Breast epithelium (tissue), 4 donors: ENCODE measurements at regions of chr10 and their contacts with region 1.

Region 1: GRCh38 chr10:30705101-30705624 is 75.6 kb upstream of the LYZL2 start:
- DNase-seq: no peak
- H3K4me3 ChIP-seq: no peak overlapping the region
- H3K27ac ChIP-seq: no peak overlapping the region
- H3K4me1 ChIP-seq: no peaks in the 10 kb centered on the region
- H3K27me3 ChIP-seq: no peaks in the 10 kb centered on the region
- CTCF ChIP-seq: no peak
- POLR2A ChIP-seq: no peak

Region 2: GRCh38 chr10:30820261-30820991 is 115.3 kb after region 1 on chr10:
- intact Hi-C with region 1: no loop called
- DNase-seq: no peak
- H3K4me3 ChIP-seq: no peak overlapping the region
- H3K27ac ChIP-seq: peak overlapping the region in 1 of 2 donors; percentile 38
- H3K4me1 ChIP-seq: no peaks in the 10 kb centered on the region
- H3K27me3 ChIP-seq: peaks cover 0 to 3% of the 10 kb centered on the region in 2 donors
- CTCF ChIP-seq: no peak
- POLR2A ChIP-seq: no peak

Region 3: DNA sequence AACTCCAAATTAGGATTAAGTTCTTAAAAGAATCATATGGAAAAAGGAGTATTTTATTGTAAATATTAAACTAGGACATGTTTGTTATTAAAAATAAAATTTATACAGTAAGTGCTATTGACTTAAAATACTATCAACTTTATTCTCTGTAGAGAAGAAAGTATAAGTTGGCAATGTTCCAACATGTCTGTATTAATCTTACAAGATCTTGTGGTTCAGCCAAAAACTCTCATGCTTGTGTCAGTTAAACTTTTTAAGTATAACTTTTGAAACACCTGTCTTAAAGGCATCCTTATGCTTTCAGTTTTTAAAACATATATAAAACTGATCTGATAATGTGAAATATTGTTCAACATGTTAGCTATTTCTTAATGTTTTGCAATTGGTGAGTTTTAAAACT is 774.6 kb after region 1 on chr10:
- intact Hi-C with region 1: loop called (anchors 5 kb)
- DNase-seq: no peak
- H3K4me3 ChIP-seq: no peak overlapping the region
- H3K27ac ChIP-seq: no peak overlapping the region
- H3K4me1 ChIP-seq: no peaks in the 10 kb centered on the region
- H3K27me3 ChIP-seq: no peaks in the 10 kb centered on the region
- CTCF ChIP-seq: no peak
- POLR2A ChIP-seq: no peak